Common myeloid progenitor, CD34-positive (primary cell): ENCODE measurements at regions of chr14 and their contacts with region 1.

Region 1: DNA sequence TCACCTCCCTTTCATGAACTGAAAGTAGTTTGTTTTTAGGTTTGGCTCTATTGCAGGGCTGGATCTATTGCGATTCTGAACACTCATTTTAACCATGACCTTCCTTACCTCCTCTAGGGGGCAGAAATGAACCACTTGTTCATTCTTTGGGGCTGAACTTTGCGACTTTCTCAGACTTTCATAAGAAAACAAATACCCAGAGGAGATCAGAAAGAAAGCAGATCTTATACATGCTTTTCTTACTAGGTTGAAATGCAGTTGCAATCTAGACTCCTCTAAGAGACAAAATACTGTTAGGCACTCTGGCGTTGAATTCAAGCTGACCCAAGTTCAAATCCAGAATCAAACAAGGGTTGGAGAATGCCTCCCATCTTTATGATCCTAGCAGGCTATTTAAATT is 32.6 kb upstream of the PLEKHG3 start:
- DNase-seq: peak; percentile 68 to 88 (median 83)
- H3K4me3 ChIP-seq: no peak overlapping the region
- H3K27ac ChIP-seq: no peak overlapping the region
- H3K4me1 ChIP-seq: peaks cover 5 to 35% (median 13%) of the 10 kb centered on the region in 4 experiments
- H3K27me3 ChIP-seq: peaks cover 0 to 5% (median 0%) of the 10 kb centered on the region in 5 experiments

Region 2: DNA sequence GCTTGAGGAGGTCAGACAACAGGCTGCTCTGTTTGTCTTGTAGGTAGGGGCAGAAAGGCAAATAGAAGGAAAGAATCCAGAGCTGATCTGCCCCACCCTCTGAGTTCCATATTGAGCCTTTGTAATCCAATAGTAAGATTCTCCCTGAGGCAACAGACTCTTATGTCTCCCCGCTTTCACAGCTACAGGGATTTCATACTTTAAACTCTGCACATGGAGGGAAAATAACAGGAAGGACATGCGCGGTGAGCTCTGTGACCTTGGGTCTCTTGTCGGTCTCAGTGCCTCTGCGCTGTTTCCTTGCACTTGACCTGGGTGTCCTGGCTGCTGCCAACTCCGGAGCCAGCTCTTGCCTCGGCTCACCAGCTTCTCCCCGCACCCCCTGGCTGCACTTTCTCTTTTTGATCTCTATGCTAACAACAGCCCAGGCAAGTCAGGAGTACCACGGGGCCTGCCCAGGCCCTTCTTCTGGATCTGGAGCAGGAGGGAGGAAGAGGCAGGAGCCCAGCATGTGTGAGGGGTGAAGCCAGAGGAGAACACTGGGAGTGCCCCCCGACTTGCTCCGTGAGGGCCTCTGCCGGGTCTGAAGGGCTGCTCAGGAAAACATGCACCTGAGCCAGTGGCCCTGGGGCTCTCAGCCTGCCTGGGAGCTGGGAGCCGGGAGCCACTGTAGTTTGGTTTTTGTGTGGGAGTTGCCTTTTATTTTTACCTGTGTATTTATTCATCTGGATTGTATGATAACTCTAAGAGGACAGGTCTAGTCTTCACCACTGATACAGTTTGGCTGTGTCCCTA is 45.9 kb before region 1 on chr14:
- CTCF ChIA-PET with region 1: no interaction called
- POLR2A ChIA-PET with region 1: no interaction called
- DNase-seq: no peak
- H3K4me3 ChIP-seq: no peak overlapping the region
- H3K27ac ChIP-seq: no peak overlapping the region
- H3K4me1 ChIP-seq: peaks cover 0 to 4% (median 0%) of the 10 kb centered on the region in 4 experiments
- H3K27me3 ChIP-seq: no peaks in the 10 kb centered on the region

Region 3: GRCh38 chr14:64654246-64654900 is 17.2 kb before region 1 on chr14:
- CTCF ChIA-PET with region 1: interaction called, 14 read pairs
- POLR2A ChIA-PET with region 1: no interaction called
- DNase-seq: peak; percentile 76 to 96 (median 95)
- H3K4me3 ChIP-seq: peak overlapping the region in 1 of 7 experiments; percentile 54
- H3K27ac ChIP-seq: no peak overlapping the region
- H3K4me1 ChIP-seq: peaks cover 10 to 28% (median 25%) of the 10 kb centered on the region in 4 experiments
- H3K27me3 ChIP-seq: no peaks in the 10 kb centered on the region

Region 4: DNA sequence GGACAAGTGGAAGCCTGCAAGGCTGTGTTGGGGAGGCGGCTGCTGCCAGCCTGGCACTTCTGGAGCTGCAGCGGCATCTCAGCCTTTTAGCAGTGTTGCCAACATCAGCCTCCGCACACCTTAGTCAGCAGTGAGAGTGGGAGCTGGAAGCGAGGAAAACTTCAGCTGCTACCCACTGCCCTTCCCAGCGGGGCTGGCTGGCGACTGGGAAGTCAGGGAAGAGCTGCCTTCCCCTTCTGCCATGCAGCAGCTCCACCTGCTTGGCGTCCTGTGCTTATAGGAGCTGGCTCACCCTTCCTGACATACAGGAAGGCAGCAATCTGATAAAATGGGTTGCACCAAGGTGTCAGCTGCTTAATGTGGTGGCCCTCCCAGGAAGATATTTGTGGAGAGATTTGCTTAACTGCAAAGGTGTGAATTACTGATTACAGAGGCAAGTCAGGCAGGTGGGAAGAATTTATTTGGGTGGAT is 17.3 kb after region 1 on chr14:
- CTCF ChIA-PET with region 1: interaction called, 17 read pairs
- POLR2A ChIA-PET with region 1: interaction called, 3 read pairs
- DNase-seq: peak in 1 of 3 donors; percentile 30
- H3K4me3 ChIP-seq: no peak overlapping the region
- H3K27ac ChIP-seq: no peak overlapping the region
- H3K4me1 ChIP-seq: peaks cover 5 to 47% (median 11%) of the 10 kb centered on the region in 4 experiments
- H3K27me3 ChIP-seq: peaks cover 0 to 22% (median 6%) of the 10 kb centered on the region in 5 experiments